ENCODE measurements at regions of chr4 and their contacts with region 1.

Region 1: DNA sequence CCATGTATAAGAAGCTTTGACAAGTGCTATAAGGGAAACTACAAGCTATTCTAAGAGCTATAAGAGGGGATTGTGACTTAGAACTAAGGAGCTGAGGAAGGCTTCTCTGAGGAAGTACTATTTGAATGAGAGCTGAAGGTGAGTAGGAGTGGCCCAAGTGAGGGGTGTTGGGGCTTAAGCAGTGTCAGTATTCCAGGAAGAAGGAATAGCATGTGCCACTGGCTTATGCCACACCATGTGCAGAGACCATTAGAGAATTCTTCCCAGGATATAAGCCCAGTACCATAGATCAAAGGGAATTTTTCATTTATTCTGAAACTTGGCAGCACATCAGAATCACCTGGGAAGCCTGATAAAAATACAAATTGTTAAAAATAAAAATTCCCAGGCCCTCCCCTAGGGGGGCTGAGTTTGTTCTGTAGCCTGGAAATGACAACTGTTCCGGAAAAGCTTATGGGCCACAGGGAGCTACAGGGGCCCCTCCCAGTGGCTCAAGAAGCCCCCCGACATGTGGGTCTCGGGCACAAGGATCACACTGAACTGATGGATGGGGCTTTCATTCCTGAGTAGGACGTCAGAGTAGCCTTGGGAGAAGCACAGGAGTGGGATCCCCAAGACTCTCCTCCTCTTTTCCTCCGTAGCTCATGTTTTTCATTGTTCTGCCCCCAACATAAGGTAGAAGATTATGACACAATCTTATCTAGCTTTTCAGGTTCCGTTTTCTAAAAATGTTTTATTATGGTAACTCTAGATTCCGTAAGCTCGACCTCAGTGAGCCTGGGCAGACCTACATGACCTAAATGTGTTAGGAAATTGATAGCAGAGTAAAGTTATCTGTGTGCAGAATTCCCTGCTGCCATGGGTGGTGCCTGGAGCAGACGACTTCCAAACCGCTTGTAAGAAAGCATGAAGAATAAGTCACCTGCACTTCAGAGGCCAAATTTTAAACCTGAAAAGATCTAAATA is 119.3 kb downstream of the AFF1 start:
- DNase-seq: no peak
- ATAC-seq: peak; percentile 50
- H3K4me3 Mint-ChIP-seq: no peak overlapping the region
- H3K27ac Mint-ChIP-seq: peak overlapping the region; percentile 75
- H3K4me1 Mint-ChIP-seq: peaks cover 65% of the 10 kb centered on the region
- H3K27me3 Mint-ChIP-seq: no peaks in the 10 kb centered on the region
- CTCF ChIP-seq: no peak

Region 2: GRCh38 chr4:87043044-87043820 is 10.9 kb before region 1 on chr4:
- CTCF ChIA-PET with region 1: interaction called, 13 read pairs
- POLR2A ChIA-PET with region 1: interaction called, 3 read pairs
- DNase-seq: no peak
- ATAC-seq: peak; percentile 59
- H3K4me3 Mint-ChIP-seq: no peak overlapping the region
- H3K27ac Mint-ChIP-seq: no peak overlapping the region
- H3K4me1 Mint-ChIP-seq: peaks cover 29% of the 10 kb centered on the region
- H3K27me3 Mint-ChIP-seq: no peaks in the 10 kb centered on the region
- CTCF ChIP-seq: no peak

Region 3: DNA sequence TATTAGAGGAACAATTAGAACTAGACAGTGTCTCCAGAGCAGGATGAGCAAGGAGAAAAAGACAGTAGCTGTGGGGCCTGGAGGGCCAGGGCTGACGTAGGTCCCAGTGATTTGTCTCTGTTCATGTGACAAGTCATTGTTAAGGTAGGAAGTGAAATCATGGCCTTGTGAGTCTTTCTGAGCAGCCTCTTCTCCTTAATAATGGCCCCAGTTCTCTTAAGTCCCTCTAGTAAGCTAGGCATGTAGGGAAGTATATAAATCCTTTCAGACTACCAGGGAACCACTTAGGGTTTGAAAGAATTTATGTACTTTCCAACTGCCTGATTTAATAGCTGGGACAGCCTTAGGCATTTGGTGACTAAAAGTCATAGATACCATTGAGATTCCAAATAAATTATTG is 33.3 kb after region 1 on chr4:
- CTCF ChIA-PET with region 1: no interaction called
- POLR2A ChIA-PET with region 1: no interaction called
- DNase-seq: no peak
- ATAC-seq: 0 out of 2 replicates have a peak, but pooled peaks have one; percentile 16
- H3K4me3 Mint-ChIP-seq: no peak overlapping the region
- H3K27ac Mint-ChIP-seq: peak overlapping the region; percentile 29
- H3K4me1 Mint-ChIP-seq: peaks cover 31% of the 10 kb centered on the region
- H3K27me3 Mint-ChIP-seq: no peaks in the 10 kb centered on the region
- CTCF ChIP-seq: no peak